ENCODE measurements at regions of chr1 and their contacts with region 1.

Region 1: DNA sequence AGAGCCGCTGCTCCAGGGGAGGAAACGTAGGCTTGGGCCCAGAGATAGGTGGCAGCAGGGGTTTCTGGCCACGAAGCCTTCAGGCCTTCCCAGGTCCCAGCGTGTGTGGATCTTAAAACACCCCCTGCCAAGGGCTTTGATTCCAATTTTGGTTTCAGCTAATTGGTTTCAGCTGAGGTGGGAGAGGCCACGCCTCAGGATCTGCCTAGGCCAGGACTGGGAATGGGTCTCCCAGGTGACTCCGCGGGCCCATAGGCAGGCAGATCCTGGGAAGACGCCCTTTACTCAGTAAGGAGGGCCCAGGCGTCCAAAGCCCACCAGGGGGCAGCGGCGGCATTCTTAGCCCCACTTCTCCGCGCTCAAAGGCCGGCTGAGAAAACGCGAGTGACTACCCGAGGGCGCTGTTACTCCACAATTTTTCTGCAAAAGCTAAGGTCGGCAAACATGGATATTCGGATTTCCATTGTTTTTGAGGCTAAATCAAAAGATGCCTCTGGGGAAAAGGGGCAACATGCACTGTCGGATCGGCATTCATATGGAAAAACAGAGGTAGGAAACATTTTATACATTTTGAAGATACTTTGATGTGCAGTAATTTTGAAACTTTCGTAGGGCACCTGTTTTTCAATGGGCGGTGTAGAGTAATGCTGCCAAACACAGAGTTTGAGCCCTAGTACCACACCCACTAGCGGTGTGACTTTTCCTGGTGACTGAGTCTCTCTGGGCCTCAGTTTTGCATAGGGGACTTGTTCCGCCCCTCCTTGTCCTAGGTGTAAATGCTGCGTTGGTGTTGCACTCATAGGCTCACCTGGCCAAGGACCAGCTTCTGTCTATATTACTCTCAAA is 31.8 kb upstream of the BCL10 start:
- DNase-seq: peak; percentile 36 to 72
- ATAC-seq: peak; percentile 62 to 82 (median 77)
- H3K4me3 ChIP-seq: no peak overlapping the region
- H3K4me3 Mint-ChIP-seq: no peak overlapping the region
- H3K27ac ChIP-seq: no peak overlapping the region
- H3K27ac Mint-ChIP-seq: no peak overlapping the region
- H3K4me1 ChIP-seq: peaks cover 7% of the 10 kb centered on the region
- H3K4me1 Mint-ChIP-seq: peaks cover 5 to 13% of the 10 kb centered on the region in 2 donors
- H3K27me3 ChIP-seq: peaks cover 26% of the 10 kb centered on the region
- H3K27me3 Mint-ChIP-seq: peaks cover 49 to 72% of the 10 kb centered on the region in 2 donors
- CTCF ChIP-seq: peak; percentile 40

Region 2: GRCh38 chr1:85148524-85149250 is 159.5 kb before region 1 on chr1:
- intact Hi-C with region 1: no loop called
- DNase-seq: no peak
- ATAC-seq: no peak
- H3K4me3 ChIP-seq: no peak overlapping the region
- H3K4me3 Mint-ChIP-seq: no peak overlapping the region
- H3K27ac ChIP-seq: no peak overlapping the region
- H3K27ac Mint-ChIP-seq: no peak overlapping the region
- H3K4me1 ChIP-seq: no peaks in the 10 kb centered on the region
- H3K4me1 Mint-ChIP-seq: no peaks in the 10 kb centered on the region
- H3K27me3 ChIP-seq: no peaks in the 10 kb centered on the region
- H3K27me3 Mint-ChIP-seq: peaks cover 0 to 3% of the 10 kb centered on the region in 2 donors
- CTCF ChIP-seq: no peak

Region 3: GRCh38 chr1:86018283-86018923 is 710.2 kb after region 1 on chr1:
- intact Hi-C with region 1: loop called (anchors 5 kb)
- DNase-seq: peak in 1 of 2 donors; percentile 29
- ATAC-seq: no peak
- H3K4me3 ChIP-seq: no peak overlapping the region
- H3K4me3 Mint-ChIP-seq: no peak overlapping the region
- H3K27ac ChIP-seq: no peak overlapping the region
- H3K27ac Mint-ChIP-seq: no peak overlapping the region
- H3K4me1 ChIP-seq: no peaks in the 10 kb centered on the region
- H3K4me1 Mint-ChIP-seq: no peaks in the 10 kb centered on the region
- H3K27me3 ChIP-seq: no peaks in the 10 kb centered on the region
- H3K27me3 Mint-ChIP-seq: no peaks in the 10 kb centered on the region
- CTCF ChIP-seq: peak; percentile 15

Measured in natural killer cell (primary cell).